HepG2 (cell line): ENCODE measurements at regions of chr6 and their contacts with region 1.

Region 1: DNA sequence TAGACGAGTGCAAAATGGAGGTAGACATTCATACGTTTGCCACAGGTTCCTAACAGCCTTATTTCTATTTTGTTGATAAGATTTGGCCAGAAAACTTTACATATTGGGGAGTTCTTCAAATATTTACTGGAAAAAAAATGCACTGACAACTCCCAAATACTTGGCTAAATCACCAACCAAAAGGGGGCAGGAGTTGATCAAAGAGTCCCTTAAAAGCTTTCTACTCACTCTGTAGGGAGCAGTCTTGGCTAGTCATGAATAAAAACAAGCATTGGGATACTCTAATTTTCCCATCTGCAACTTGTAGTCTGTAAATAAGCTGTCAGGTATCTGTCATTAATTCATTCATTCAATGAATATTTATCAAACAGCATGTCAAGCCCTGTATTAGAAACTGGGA is 18.4 kb downstream of the TENT5A start:
- DNase-seq: peak; percentile 49
- ATAC-seq: peak; percentile 71
- H3K4me3 ChIP-seq: no peak overlapping the region
- H3K27ac ChIP-seq: no peak overlapping the region
- H3K4me1 ChIP-seq: no peaks in the 10 kb centered on the region
- H3K27me3 ChIP-seq: no peaks in the 10 kb centered on the region
- CTCF ChIP-seq: peak; percentile 43
- EP300 ChIP-seq: no peak
- POLR2A ChIP-seq: no peak
- RAD21 ChIP-seq: no peak

Region 2: GRCh38 chr6:81834141-81834681 is 100.1 kb after region 1 on chr6:
- CTCF ChIA-PET with region 1: no interaction called
- POLR2A ChIA-PET with region 1: no interaction called
- in situ Hi-C with region 1: no loop called
- intact Hi-C with region 1: no loop called
- DNase-seq: no peak
- ATAC-seq: no peak
- H3K4me3 ChIP-seq: no peak overlapping the region
- H3K27ac ChIP-seq: no peak overlapping the region
- H3K4me1 ChIP-seq: peaks cover 60% of the 10 kb centered on the region
- H3K27me3 ChIP-seq: no peaks in the 10 kb centered on the region
- CTCF ChIP-seq: no peak
- EP300 ChIP-seq: no peak
- POLR2A ChIP-seq: no peak
- RAD21 ChIP-seq: no peak

Region 3: GRCh38 chr6:81929828-81930227 is 195.7 kb after region 1 on chr6:
- CTCF ChIA-PET with region 1: no interaction called
- POLR2A ChIA-PET with region 1: no interaction called
- in situ Hi-C with region 1: no loop called
- intact Hi-C with region 1: no loop called
- DNase-seq: no peak
- ATAC-seq: no peak
- H3K4me3 ChIP-seq: no peak overlapping the region
- H3K27ac ChIP-seq: no peak overlapping the region
- H3K4me1 ChIP-seq: peaks cover 30% of the 10 kb centered on the region
- H3K27me3 ChIP-seq: no peaks in the 10 kb centered on the region
- CTCF ChIP-seq: no peak
- EP300 ChIP-seq: no peak
- POLR2A ChIP-seq: no peak
- RAD21 ChIP-seq: no peak

Region 4: GRCh38 chr6:82040405-82041221 is 306.5 kb after region 1 on chr6:
- CTCF ChIA-PET with region 1: no interaction called
- POLR2A ChIA-PET with region 1: no interaction called
- in situ Hi-C with region 1: no loop called
- intact Hi-C with region 1: loop called (anchors 1 kb)
- DNase-seq: peak; percentile 46
- ATAC-seq: peak; percentile 97
- H3K4me3 ChIP-seq: no peak overlapping the region
- H3K27ac ChIP-seq: no peak overlapping the region
- H3K4me1 ChIP-seq: peaks cover 14% of the 10 kb centered on the region
- H3K27me3 ChIP-seq: no peaks in the 10 kb centered on the region
- CTCF ChIP-seq: peak; percentile 80
- EP300 ChIP-seq: no peak
- POLR2A ChIP-seq: no peak
- RAD21 ChIP-seq: peak; percentile 55